ENCODE measurements at regions of chr4 and their contacts with region 1.

Region 1: GRCh38 chr4:154332681-154333421 is 158.7 kb downstream of the DCHS2 start:
- DNase-seq: peak; percentile 78

Region 2: GRCh38 chr4:154390324-154390723 is 57.5 kb after region 1 on chr4:
- intact Hi-C with region 1: no loop called
- DNase-seq: no peak

Region 3: DNA sequence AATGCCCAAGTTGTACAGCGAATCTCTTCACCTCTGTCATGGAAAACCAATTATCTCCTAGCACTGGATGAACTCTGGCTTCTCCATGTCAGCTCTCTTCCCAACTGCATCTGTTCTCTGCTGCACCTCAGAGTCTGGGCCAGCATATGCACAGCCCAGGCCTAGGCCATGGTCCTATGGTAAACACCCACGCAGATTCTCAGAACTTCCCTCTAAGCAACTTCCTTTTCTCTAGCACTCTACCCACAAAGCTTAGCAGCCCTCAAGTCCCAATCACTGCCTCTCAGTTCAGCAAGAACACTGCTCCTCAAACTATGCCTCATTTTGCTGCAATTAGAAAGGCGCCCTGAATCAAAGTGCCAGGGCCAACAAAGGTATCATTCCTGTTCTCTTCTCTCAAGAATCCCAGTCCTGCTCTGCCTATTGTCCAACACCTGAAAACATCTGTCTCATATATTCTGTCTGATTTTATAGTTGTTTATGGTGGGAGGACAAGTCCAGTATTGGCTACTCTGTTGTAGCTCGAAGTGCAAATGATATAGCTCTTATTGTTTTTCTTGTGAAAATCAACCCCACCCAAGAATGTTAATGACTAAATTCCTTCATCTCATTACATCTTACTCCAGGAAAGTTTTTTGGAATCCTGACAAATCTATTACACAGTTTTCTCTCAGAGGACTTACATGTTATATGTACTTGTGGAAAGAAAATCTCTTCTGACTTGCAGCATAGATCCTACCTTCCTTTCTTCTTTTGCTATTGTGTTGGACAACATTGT is 73.4 kb after region 1 on chr4:
- intact Hi-C with region 1: no loop called
- DNase-seq: no peak

Region 4: DNA sequence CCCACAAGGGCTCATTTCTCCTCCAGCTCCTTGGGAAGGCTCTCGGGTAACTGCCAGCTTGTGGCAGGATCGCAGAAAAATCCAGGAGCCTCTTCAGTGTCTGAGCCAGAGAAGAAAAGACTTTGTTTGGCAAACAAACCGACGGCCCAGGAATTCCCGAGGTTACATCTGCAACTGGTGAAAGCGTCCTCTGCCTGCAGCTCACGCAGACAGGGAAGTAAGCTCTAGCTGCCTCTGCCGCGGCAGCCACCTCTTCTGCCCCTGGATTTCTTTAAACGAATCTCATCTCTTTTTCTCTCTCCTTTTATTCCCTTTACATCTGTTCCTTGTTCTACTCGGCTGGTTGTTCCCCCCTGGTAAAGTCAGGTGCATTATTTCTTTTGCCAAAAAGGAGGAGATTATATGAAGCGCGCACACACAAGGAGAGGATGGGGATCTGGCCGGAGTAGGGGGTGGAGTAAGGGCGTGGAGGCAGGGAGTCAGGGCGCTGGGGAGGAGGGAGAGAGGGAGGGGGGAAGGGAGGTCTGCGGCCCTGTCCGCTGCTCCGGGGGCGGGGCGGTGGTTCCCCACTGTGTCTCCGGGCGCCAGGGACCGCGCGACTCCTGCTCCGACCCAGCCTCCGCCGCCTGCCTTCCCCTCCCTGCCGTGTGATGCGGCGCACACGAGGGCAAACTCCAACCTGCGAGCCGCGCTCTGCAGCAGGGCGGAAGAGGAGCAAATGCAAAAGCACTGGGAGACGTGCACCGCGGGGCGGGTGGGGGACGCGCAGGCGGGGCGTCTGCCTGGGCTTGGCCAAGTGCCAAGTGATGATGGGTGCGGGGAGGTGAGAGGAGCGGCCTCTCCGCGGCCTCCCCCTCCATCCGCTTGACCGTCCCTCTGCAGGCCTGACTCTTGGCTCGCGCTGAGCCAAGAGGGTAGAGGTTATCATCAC is 158.8 kb after region 1 on chr4 and contains the start of gene DCHS2:
- intact Hi-C with region 1: loop called in 1 of 2 experiments (anchors 10 kb)
- DNase-seq: no peak
- total RNA-seq, gene DCHS2: 0.28 to 0.71 TPM